ENCODE measurements at regions of chrX and their contacts with region 1.

Region 1: GRCh38 chrX:31061091-31061490 is 10.8 kb downstream of the FTHL17 start:
- DNase-seq: no peak
- H3K4me3 Mint-ChIP-seq: no peak overlapping the region
- H3K27ac Mint-ChIP-seq: no peak overlapping the region
- H3K4me1 Mint-ChIP-seq: peaks cover 23% of the 10 kb centered on the region
- H3K27me3 Mint-ChIP-seq: no peaks in the 10 kb centered on the region

Region 2: DNA sequence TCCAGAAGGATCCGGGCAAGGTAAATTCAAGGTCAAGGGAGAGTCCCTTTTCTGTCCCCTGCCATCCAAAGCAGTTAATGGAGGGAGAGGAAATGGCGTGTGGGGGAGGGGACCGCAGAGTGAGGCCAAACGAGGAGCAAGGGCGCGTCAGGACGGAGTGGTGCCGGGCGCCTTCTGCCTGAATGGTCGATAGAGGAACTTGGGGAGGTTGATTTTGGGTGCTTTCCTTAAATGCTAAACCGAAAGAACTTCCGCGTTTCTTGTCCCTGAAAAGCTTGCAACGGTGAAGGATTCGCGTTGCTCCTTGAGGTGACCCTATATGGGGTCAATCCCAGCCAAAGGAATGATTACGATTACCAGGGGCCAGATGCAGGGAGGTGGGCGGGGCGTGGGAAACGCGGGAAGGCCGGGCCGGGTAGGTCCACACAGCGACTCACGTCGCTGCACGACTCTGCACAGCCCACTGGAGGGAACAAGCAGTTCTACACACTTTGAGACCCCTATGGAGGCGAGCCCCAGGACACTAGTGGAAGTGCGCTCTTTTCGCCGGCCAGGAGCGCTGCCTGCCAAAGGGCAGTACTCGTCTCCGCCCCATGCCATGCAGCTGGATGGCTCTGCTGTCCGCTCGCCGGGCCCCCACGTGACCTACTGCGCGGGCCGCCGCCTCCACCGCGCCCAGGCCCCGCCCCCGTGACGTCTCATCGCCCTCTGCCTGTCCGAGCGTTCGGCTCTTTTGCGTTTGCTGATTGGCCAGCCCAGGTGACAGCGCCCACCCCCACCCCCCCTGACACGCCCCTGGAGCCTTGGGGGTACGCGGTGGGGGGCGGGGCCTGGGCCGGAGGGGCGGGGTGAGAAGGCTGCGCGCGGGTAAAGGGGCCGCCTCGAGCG is 408.3 kb before region 1 on chrX:
- intact Hi-C with region 1: loop called (anchors 5 kb)
- DNase-seq: peak; percentile 89
- H3K4me3 Mint-ChIP-seq: peak overlapping the region; percentile 95
- H3K27ac Mint-ChIP-seq: peak overlapping the region; percentile 97
- H3K4me1 Mint-ChIP-seq: peaks cover 49% of the 10 kb centered on the region
- H3K27me3 Mint-ChIP-seq: no peaks in the 10 kb centered on the region

Region 3: GRCh38 chrX:30971774-30972603 is 89.1 kb before region 1 on chrX:
- intact Hi-C with region 1: no loop called
- DNase-seq: peak; percentile 7
- H3K4me3 Mint-ChIP-seq: peak overlapping the region; percentile 79
- H3K27ac Mint-ChIP-seq: peak overlapping the region; percentile 61
- H3K4me1 Mint-ChIP-seq: peaks cover 18% of the 10 kb centered on the region
- H3K27me3 Mint-ChIP-seq: peaks cover 6% of the 10 kb centered on the region

Region 4: DNA sequence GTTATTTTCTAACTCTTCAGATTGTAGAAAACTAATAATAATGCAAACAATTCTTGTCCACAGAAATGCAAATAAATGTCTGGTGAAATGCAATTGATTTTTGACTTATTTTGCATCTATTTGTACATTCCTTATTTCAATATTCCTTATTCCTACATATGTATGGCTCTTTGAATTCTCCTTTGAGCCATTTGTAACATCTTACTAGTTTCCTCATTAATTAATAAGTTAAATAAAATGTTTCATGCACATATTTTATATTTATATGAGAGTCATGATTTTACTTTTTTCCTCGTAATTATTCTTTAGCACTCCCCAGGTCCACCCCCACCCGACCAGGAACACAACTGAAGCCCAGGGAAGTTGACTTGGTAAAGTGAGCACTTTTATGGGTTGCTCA is 13.4 kb after region 1 on chrX:
- intact Hi-C with region 1: loop called (anchors 2 kb)
- DNase-seq: no peak
- H3K4me3 Mint-ChIP-seq: no peak overlapping the region
- H3K27ac Mint-ChIP-seq: no peak overlapping the region
- H3K4me1 Mint-ChIP-seq: peaks cover 12% of the 10 kb centered on the region
- H3K27me3 Mint-ChIP-seq: no peaks in the 10 kb centered on the region

Region 5: DNA sequence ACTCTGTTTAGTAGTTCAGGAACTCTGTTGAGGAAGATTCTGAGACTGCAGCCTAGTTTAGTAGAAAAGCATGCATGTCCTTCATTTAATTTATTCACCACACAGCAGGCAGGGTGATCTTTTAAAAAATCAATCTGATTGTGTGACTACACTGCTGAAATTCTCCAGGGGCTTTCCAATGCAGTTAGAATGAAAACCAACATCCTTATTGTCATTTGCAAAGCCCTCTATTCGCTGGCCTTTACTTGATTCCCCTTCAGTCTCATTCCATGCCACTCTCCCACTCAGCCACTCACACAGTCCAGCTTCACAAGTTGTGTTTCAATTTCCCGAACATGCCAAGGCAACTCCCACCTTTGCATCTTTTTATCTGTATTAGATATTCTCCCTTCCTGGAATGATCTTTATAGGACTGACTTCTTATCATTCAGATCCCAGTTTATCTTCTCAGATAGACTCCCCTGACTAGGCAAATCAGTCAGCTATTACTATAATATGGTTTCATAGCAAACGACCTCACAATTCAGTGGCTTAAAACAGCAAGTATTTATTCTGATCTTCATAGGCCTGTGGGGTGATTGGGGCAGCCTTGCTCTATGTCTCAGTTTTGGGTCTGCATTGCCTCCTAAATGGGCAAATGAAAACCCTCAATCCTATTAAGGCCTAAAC is 32.0 kb after region 1 on chrX:
- intact Hi-C with region 1: loop called (anchors 1 kb)
- DNase-seq: no peak
- H3K4me3 Mint-ChIP-seq: peak overlapping the region; percentile 61
- H3K27ac Mint-ChIP-seq: peak overlapping the region; percentile 92
- H3K4me1 Mint-ChIP-seq: peaks cover 46% of the 10 kb centered on the region
- H3K27me3 Mint-ChIP-seq: peaks cover 2% of the 10 kb centered on the region

Region 6: DNA sequence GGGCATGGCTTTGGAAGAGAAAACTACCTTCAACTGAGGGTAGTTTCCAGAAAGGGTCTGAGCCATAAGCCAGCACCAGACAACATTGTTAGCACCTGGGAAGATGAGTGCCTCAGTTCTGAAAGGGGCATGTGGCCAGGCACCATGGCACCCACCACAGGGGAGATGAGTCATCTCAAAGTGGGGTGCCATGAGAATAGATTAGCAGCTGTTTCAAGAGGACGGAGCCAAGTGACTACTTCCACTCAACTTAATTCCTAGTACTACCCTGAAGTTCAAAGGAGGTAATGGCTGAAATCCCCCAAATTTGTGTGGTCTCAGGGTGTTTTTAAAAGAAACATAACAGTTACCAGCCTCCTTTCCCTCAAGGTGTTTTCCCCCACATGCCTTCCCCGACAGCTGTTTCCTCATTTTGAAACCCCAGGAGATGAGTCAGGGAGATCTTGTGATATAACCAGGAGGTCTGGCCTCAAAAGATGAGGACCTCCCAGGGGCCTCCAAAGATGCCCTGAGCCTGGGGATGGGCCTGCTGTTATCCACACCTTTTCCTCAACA is 38.5 kb after region 1 on chrX:
- intact Hi-C with region 1: loop called (anchors 1 kb)
- DNase-seq: peak; percentile 59
- H3K4me3 Mint-ChIP-seq: no peak overlapping the region
- H3K27ac Mint-ChIP-seq: peak overlapping the region; percentile 86
- H3K4me1 Mint-ChIP-seq: peaks cover 34% of the 10 kb centered on the region
- H3K27me3 Mint-ChIP-seq: no peaks in the 10 kb centered on the region

Region 7: DNA sequence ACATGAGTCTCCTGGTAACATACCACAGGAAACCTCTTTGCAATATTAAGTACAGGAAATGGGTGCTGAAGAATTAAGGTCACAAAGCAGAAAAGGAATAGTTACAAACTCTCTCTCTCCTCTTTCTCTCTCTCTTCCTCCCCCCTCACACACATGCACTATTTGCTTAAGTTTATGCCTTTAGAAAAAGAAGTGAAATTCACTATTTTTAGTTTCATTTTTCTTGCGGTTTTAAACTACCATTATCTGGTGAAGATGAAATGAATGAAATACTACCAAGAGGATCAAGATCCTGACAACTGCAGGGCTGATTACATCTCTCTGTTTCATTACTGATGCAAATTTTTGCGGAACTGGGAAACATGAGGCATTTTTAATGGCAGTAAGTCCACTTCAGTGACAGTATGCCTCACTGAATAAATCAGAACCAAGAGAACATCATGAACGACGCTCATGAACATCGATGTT is 75.1 kb after region 1 on chrX:
- intact Hi-C with region 1: loop called (anchors 1 kb)
- DNase-seq: no peak
- H3K4me3 Mint-ChIP-seq: peak overlapping the region; percentile 48
- H3K27ac Mint-ChIP-seq: peak overlapping the region; percentile 79
- H3K4me1 Mint-ChIP-seq: peaks cover 23% of the 10 kb centered on the region
- H3K27me3 Mint-ChIP-seq: no peaks in the 10 kb centered on the region

Region 8: GRCh38 chrX:31266172-31267076 is 205.3 kb after region 1 on chrX:
- intact Hi-C with region 1: loop called (anchors 5 kb)
- DNase-seq: peak; percentile 12
- H3K4me3 Mint-ChIP-seq: peak overlapping the region; percentile 85
- H3K27ac Mint-ChIP-seq: peak overlapping the region; percentile 18
- H3K4me1 Mint-ChIP-seq: peaks cover 21% of the 10 kb centered on the region
- H3K27me3 Mint-ChIP-seq: peaks cover 17% of the 10 kb centered on the region

Measured in activated T-helper 1 cell treated with anti-CD3 and anti-CD28 coated beads, Interleukin-12 subunit alpha, Interleukin-12 subunit beta, Interleukin-2, Interleukin-4 antibody, amounts not matched to agents 30 ng/mL and 10 ng/mL and 1 ng/mL, durations not matched to agents 14 hours and 24 hours and 36 hours (primary cell).